SK-N-SH (cell line): ENCODE measurements at regions of chr10 and their contacts with region 1.

Region 1: DNA sequence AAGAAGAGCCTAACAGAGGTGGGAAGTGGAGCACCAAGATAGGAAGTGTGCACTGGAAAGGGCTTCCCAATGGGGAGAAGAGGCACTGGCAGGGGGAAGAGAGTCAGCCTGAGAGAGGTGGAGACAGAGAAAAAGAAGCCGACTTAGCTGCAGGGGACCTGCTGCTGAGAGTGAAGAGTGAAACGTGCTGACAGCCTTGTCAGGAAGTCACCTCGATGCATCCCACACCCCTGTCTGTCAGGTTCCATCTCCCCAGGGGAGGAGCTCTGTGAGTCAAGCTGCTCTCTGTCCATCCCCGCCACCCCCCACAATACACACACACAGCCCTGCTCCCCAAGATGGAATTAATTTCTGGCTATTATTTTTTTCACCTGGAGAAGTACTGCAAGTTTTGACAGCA is 14.0 kb downstream of the KAZALD1 start:
- DNase-seq: no peak
- H3K4me3 ChIP-seq: no peak overlapping the region
- H3K27ac ChIP-seq: no peak overlapping the region
- H3K4me1 ChIP-seq: peaks cover 0 to 12% of the 10 kb centered on the region in 2 experiments; a peak in 1 of 4 replicates
- H3K27me3 ChIP-seq: peaks cover 34% of the 10 kb centered on the region; the same call in 1 of the 2 replicates
- CTCF ChIP-seq: no peak
- EP300 ChIP-seq: no peak
- RAD21 ChIP-seq: no peak

Region 2: DNA sequence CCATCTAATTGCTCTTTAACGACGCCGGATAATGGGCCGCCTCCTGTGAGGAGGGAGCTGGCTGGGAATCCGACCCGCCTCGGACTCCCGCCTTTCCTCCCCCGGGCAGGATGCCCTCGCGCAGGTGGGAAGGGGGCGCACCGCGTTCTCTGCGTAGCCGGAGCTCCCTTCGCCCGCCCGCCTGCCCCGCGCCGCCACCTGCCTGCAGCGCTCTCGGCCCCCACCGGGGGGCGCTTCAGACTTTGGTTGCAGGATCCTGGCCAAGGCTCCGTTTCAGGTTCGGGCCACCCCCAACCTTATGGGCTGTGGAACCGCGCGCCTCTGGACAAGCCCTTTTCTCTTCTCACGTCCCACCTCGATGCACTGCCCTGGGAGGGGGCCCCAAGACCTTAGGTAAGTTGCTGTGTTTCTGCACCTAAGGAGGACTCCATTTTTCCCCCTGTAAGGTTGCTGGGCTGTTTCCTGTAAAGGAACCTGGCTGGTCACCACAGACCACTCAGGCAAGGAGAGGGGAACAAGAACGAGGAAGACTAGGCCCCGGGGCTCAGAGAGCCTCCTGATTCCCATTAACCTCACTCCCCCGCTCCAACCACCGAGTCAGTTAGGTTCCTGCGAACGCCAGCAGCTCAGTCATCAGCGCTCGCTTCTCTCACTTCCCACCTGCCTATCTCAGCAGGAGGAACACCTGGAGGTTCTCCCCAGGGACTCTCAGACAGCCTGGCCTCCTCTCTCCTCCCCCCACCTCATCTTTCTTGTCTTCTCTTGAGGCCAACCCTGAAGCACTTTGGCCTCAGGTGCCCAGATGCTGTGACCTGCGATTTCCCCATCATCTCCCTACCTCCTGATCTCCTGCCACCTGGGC is 25.3 kb before region 1 on chr10:
- CTCF ChIA-PET with region 1: interaction called, 98 read pairs
- POLR2A ChIA-PET with region 1: no interaction called
- DNase-seq: peak; percentile 87
- H3K4me3 ChIP-seq: peak overlapping the region; percentile 32 to 33; a peak in 3 of 4 replicates
- H3K27ac ChIP-seq: no peak overlapping the region
- H3K4me1 ChIP-seq: peaks cover 4 to 5% of the 10 kb centered on the region in 2 experiments; a peak in 1 of 4 replicates
- H3K27me3 ChIP-seq: no peaks in the 10 kb centered on the region
- CTCF ChIP-seq: peak; percentile 75
- EP300 ChIP-seq: no peak
- RAD21 ChIP-seq: peak; percentile 42

Region 3: DNA sequence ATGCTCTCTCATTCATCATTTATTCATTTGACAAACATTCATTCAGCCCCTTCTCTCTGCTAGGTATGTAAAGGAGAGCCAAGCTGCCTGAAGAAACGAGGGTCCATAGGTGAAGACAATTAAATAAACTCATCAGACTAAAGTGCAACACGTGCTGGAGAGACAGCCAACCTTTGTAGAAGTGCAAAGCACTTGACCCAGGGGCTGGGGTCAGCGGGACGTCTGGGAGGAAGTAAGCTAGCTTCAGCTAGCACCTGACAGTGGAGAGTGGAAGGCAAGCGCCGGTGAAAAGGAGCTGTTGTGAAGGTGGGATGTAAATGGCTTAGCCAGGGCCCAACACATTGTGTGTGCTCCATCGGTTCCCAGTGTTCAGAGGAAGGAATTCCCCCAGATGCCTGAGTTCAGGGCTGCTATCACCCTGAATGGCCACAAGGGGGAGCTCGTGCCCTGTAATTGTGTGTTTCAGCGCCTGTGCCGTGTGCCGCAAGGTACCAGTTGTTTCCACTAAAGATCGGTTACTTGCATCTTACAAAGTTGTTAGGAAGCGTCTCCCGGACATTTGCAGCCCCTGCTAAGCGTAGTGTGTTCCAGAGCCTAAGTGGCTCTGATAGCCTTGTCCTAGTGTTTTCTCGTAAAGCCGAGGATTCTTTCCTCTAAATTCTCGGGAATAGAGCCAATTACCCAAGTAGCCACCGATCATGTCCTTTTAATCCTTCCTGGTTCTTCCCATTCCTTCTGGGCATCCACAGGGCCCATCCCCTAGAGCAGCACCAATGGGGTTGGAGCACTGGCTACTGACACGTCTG is 85.9 kb after region 1 on chr10:
- CTCF ChIA-PET with region 1: no interaction called
- POLR2A ChIA-PET with region 1: no interaction called
- DNase-seq: peak; percentile 77
- H3K4me3 ChIP-seq: peak overlapping the region; percentile 48 to 64
- H3K27ac ChIP-seq: no peak overlapping the region
- H3K4me1 ChIP-seq: peaks cover 0 to 10% of the 10 kb centered on the region in 2 experiments; a peak in 1 of 4 replicates
- H3K27me3 ChIP-seq: peaks cover 33% of the 10 kb centered on the region
- CTCF ChIP-seq: peak; percentile 96
- EP300 ChIP-seq: no peak
- RAD21 ChIP-seq: peak; percentile 85